ENCODE measurements at regions of chr1 and their contacts with region 1.

Region 1: DNA sequence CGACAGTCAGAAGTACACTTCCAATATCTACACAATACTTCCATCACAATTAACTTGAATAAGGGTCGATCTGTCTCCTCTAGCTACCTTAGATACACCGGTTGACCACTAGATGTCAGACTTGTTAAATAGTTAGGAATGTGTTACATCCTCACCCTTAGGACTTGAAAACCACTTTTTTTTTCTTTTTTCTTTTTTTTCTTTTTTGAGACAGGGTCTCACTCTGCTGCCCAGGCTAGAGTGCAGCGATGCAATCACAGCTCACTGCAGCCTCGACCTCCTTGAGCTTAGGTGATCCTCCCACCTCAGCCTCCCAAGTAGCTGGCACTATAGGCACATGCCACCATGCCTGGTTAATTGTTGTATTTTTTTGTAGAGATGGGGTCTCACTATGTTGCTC is 120.4 kb upstream of the GREM2 start:
- DNase-seq: peak; percentile 86
- H3K4me3 Mint-ChIP-seq: no peak overlapping the region
- H3K27ac Mint-ChIP-seq: no peak overlapping the region
- H3K4me1 Mint-ChIP-seq: peaks cover 6% of the 10 kb centered on the region
- H3K27me3 Mint-ChIP-seq: no peaks in the 10 kb centered on the region
- CTCF ChIP-seq: peak; percentile 92

Region 2: GRCh38 chr1:240747907-240748306 is 15.5 kb after region 1 on chr1:
- CTCF ChIA-PET with region 1: interaction called, 53 read pairs
- POLR2A ChIA-PET with region 1: no interaction called
- intact Hi-C with region 1: no loop called
- DNase-seq: no peak
- H3K4me3 Mint-ChIP-seq: no peak overlapping the region
- H3K27ac Mint-ChIP-seq: no peak overlapping the region
- H3K4me1 Mint-ChIP-seq: no peaks in the 10 kb centered on the region
- H3K27me3 Mint-ChIP-seq: no peaks in the 10 kb centered on the region
- CTCF ChIP-seq: no peak

Region 3: GRCh38 chr1:240797050-240797449 is 64.7 kb after region 1 on chr1:
- CTCF ChIA-PET with region 1: interaction called, 17 read pairs
- POLR2A ChIA-PET with region 1: no interaction called
- intact Hi-C with region 1: no loop called
- DNase-seq: peak; percentile 90
- H3K4me3 Mint-ChIP-seq: no peak overlapping the region
- H3K27ac Mint-ChIP-seq: peak overlapping the region; percentile 67
- H3K4me1 Mint-ChIP-seq: peaks cover 36% of the 10 kb centered on the region
- H3K27me3 Mint-ChIP-seq: no peaks in the 10 kb centered on the region
- CTCF ChIP-seq: no peak

Region 4: GRCh38 chr1:240869071-240869470 is 136.7 kb after region 1 on chr1:
- CTCF ChIA-PET with region 1: interaction called, 19 read pairs
- POLR2A ChIA-PET with region 1: no interaction called
- intact Hi-C with region 1: no loop called
- DNase-seq: no peak
- H3K4me3 Mint-ChIP-seq: no peak overlapping the region
- H3K27ac Mint-ChIP-seq: no peak overlapping the region
- H3K4me1 Mint-ChIP-seq: no peaks in the 10 kb centered on the region
- H3K27me3 Mint-ChIP-seq: no peaks in the 10 kb centered on the region
- CTCF ChIP-seq: no peak

Region 5: GRCh38 chr1:240962086-240962485 is 229.7 kb after region 1 on chr1:
- CTCF ChIA-PET with region 1: interaction called, 15 read pairs
- POLR2A ChIA-PET with region 1: no interaction called
- intact Hi-C with region 1: no loop called
- DNase-seq: no peak
- H3K4me3 Mint-ChIP-seq: no peak overlapping the region
- H3K27ac Mint-ChIP-seq: no peak overlapping the region
- H3K4me1 Mint-ChIP-seq: no peaks in the 10 kb centered on the region
- H3K27me3 Mint-ChIP-seq: no peaks in the 10 kb centered on the region
- CTCF ChIP-seq: no peak

Measured in MCF 10A (cell line).